RWPE1 (cell line): ENCODE measurements at regions of chr14 and their contacts with region 1.

Region 1: GRCh38 chr14:104723648-104724406 is at the start of gene ADSS1:
- DNase-seq: peak; percentile 67
- H3K27ac ChIP-seq: peak within 1 kb of the TSS; percentile 81
- CTCF ChIP-seq: peak; percentile 96

Region 2: DNA sequence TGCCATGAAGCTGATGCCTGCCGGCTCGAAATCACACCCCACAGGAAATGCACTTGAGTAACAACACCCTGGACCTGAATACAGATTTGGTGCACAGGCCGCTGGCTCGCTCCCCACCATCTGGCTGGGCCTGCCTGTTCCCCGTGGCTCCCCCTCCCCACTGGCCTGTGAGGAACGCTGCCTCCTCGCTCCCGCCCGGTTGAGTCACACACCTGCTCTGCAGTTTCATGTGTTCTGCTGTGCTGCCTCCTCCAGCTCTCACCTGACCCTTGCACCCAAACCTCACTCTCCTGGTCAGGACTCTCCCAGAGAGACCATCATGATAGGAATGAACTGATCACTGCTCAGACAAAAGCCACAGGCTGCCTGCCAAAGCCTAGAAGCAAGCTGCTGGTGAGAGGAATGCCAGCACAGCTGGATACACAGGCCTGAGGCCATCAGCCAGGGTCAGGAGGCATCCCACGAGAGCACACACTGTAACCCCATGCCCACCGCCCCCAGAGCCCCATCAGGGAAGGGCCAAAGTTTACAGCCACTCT is 25.4 kb after region 1 on chr14:
- CTCF ChIA-PET with region 1: interaction called, 28 read pairs
- POLR2A ChIA-PET with region 1: interaction called, 7 read pairs
- DNase-seq: peak; percentile 55
- H3K27ac ChIP-seq: peak overlapping the region; percentile 94
- CTCF ChIP-seq: peak; percentile 31; the same call in 1 of the 2 replicates